ENCODE measurements at regions of chr5 and their contacts with region 1.

Region 1: GRCh38 chr5:171913987-171914273 is 92.5 kb downstream of the FBXW11 start:
- DNase-seq: no peak
- H3K4me3 ChIP-seq: no peak overlapping the region
- H3K27ac ChIP-seq: no peak overlapping the region
- H3K4me1 ChIP-seq: peaks cover 2 to 16% of the 10 kb centered on the region in 2 experiments; a peak in 2 of 4 replicates
- H3K27me3 ChIP-seq: no peaks in the 10 kb centered on the region
- CTCF ChIP-seq: no peak
- EP300 ChIP-seq: no peak
- RAD21 ChIP-seq: no peak

Region 2: GRCh38 chr5:171898386-171898785 is 15.5 kb before region 1 on chr5:
- CTCF ChIA-PET with region 1: interaction called, 12 read pairs
- POLR2A ChIA-PET with region 1: no interaction called
- DNase-seq: no peak
- H3K4me3 ChIP-seq: no peak overlapping the region
- H3K27ac ChIP-seq: no peak overlapping the region
- H3K4me1 ChIP-seq: peaks cover 2 to 11% of the 10 kb centered on the region in 2 experiments; a peak in 3 of 4 replicates
- H3K27me3 ChIP-seq: no peaks in the 10 kb centered on the region
- CTCF ChIP-seq: no peak
- EP300 ChIP-seq: no peak
- RAD21 ChIP-seq: no peak

Region 3: DNA sequence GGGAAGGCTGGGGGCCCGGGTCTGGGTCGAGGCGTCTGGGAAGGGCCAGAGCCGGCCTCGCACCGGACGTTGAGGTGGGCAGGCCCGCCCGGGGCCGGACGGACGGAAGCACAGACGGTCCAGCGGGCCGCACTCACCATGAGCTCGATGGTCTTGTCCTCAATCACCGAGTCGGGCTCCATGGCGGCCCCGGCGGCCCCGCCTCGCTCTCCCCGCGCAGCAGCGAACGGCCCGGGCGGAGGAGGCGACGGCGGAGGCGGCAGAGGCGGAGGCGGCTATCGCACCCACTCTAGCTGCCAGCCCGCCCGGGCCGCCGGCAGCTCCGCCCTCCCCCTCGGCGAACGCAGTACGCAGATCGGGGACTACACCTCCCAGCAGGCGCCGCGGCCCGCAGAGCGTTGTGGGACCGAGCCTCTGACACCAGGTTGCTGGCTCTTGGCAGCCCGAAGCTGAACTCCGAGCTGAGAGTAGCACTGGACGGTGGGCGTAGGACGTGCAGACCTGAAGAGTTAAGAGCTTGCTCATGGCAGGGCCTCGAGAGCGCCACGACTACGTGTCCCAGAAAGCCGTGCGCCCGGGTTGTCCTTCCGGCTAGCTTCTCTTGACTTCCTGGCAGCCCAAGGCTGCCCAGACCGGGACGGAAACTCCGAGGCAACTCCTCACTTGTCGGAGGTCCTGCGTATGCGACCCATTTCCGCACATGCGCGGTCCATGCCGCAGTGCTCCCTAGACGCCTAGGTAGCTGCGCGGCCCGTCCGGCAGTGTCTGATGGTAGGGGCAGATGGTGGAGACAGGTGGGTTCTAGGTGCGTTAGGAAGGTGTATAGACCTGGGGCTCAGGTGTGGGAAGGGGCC is 92.6 kb after region 1 on chr5 and contains the start of gene FBXW11:
- CTCF ChIA-PET with region 1: interaction called, 26 read pairs
- POLR2A ChIA-PET with region 1: no interaction called
- DNase-seq: peak; percentile 93
- H3K4me3 ChIP-seq: peak within 1 kb of the TSS; percentile 85 to 94
- H3K27ac ChIP-seq: peak within 1 kb of the TSS; percentile 97 to 98
- H3K4me1 ChIP-seq: peaks cover 17 to 20% of the 10 kb centered on the region in 2 experiments
- H3K27me3 ChIP-seq: no peaks in the 10 kb centered on the region
- CTCF ChIP-seq: no peak
- EP300 ChIP-seq: no peak
- RAD21 ChIP-seq: no peak
- polyA plus RNA-seq, gene FBXW11: 37.5 and 51.1 TPM in 2 replicates

Region 4: DNA sequence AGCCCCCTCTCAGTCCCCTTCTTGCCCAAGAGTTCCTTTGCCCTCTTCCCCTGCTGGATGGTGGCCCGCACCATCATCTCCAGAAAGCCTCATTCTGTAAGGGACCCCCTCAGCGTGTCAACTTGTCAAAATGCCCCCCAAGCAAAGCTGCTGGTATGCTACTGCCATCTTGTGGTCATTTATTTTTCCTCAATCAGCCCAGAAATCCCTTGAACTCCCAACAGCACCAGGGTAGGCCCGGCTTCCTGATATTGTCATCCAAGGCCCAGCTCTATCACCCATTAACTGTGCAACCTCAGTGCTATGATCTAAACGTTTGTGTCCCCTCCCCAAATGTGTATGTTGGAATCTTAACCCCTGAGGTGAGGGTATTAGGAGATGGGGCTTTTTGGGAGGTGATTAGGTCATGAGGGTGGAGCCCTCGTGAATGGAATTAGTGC is 145.8 kb after region 1 on chr5:
- CTCF ChIA-PET with region 1: interaction called, 25 read pairs
- POLR2A ChIA-PET with region 1: no interaction called
- DNase-seq: peak; percentile 56
- H3K4me3 ChIP-seq: no peak overlapping the region
- H3K27ac ChIP-seq: no peak overlapping the region
- H3K4me1 ChIP-seq: no peaks in the 10 kb centered on the region
- H3K27me3 ChIP-seq: no peaks in the 10 kb centered on the region
- CTCF ChIP-seq: peak; percentile 69
- EP300 ChIP-seq: no peak
- RAD21 ChIP-seq: peak; percentile 62

Region 5: GRCh38 chr5:172188033-172188892 is 274.3 kb after region 1 on chr5 and contains the start of gene STK10:
- CTCF ChIA-PET with region 1: interaction called, 14 read pairs
- POLR2A ChIA-PET with region 1: no interaction called
- DNase-seq: peak; percentile 98
- H3K4me3 ChIP-seq: peak within 1 kb of the TSS; percentile 70 to 99
- H3K27ac ChIP-seq: peak within 1 kb of the TSS; percentile 67 to 80
- H3K4me1 ChIP-seq: peaks cover 0 to 5% of the 10 kb centered on the region in 2 experiments; a peak in 1 of 4 replicates
- H3K27me3 ChIP-seq: no peaks in the 10 kb centered on the region
- CTCF ChIP-seq: peak; percentile 80
- EP300 ChIP-seq: 0 out of 4 replicates have a peak, but pooled peaks of 1 of the 2 experiments have one; percentile 30
- RAD21 ChIP-seq: peak; percentile 88
- polyA plus RNA-seq, gene STK10: 10.1 and 11.0 TPM in 2 replicates